Astrocyte of the cerebellum (primary cell): ENCODE measurements at regions of chr9 and their contacts with region 1.

Region 1: GRCh38 chr9:114587385-114588202 is at the start of gene ATP6V1G1:
- DNase-seq: peak; percentile 97
- H3K4me3 ChIP-seq: peak within 1 kb of the TSS; percentile 98
- CTCF ChIP-seq: no peak

Region 2: DNA sequence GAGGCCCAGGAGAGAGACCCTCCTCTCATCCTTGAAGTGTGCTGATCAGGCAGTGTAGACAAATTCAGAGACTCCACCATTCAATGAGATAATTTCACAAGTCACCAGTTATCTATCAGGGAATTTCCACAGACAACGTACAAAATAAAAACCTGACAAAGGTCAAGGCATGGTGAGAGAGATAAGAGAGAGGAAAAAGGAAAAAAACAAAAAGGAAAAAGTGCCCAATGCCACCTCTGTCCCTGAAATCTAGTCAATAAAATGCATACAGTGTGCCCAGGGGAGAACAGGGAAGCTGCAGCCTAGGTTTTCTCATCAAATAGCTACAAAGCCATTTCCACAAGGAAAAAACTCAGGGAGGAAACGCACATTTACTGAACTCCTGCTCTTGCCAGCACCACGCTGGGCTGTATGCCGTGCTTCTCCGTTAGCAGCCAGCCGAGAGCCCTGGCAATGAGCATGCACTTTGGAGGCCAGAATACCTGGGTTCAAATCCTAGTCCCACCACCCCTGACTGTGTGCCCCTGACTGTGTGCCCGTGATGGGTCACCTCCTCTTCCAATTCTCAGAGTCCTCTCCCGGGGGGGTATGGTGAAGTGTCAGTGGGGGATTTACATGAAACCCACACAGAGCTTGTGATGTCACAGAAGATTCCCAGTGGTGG is 93.9 kb before region 1 on chr9:
- in situ Hi-C with region 1: loop called (anchors 5 kb)
- DNase-seq: no peak
- H3K4me3 ChIP-seq: no peak overlapping the region
- CTCF ChIP-seq: no peak

Region 3: GRCh38 chr9:114532561-114533237 is 54.9 kb before region 1 on chr9:
- in situ Hi-C with region 1: loop called (anchors 5 kb)
- DNase-seq: no peak
- H3K4me3 ChIP-seq: no peak overlapping the region
- CTCF ChIP-seq: no peak

Region 4: DNA sequence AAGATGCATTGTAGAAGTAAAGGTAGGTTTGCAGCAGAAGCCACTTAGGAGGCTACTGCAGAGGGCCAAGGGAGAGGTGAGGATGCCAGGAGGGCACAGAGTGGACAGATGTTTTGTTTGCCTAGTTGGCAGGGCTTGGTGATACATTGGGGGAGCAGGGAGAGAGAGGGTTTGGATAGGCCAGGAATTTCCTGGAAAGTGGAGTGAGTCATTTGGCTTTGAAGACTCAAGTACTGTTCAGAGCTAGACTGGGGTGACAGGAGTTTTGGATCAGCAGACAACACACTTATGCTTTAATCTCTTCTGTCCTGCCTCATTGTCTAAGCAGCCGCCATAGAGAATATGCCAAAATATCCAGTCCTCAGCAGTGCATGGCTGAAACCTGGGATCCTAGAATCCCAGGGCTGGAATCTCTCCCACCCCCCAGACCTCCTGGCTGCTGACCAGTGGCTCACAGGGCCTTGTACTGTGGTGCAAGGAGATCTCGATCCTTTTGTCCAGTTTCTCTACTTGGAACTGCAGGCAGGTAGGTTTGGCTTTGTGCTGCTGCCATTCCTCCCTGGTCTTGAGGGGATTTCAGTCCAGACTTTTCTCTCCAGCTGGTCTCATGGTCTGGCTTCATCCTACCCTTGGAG is 34.5 kb after region 1 on chr9:
- in situ Hi-C with region 1: loop called (anchors 5 kb)
- DNase-seq: peak; percentile 43
- H3K4me3 ChIP-seq: no peak overlapping the region
- CTCF ChIP-seq: no peak